Sigmoid colon (tissue), 7 donors: ENCODE measurements at regions of chr1 and their contacts with region 1.

Region 1: DNA sequence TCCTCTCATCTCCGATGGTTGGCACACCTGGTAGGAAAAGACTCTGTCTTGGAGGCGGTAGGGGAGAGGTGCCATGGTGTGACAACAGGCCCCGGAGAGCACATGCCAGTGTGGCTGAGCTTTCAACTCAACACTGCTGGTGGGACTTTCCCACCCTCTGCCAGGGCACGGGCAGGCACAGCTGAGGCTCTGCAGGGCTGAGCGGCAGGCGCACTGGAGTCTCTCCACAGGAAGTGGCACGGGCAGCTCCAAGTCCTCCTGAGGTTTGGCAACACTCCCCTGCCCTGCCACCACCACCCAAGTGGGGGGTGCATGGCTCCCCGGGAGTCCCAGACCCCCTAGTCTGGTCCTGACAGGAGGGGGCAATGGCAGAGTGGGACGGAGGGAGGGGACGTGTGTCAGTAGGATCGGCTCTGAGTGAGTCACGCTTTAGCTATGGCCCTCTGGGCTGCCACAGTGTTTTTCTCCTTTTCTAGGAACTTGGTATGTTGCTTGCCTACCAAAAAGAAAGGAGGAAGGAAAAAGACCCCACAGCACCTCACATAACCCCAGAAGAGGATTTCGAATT is 27.3 kb upstream of the EVA1B start:
- DNase-seq: peak; percentile 77
- H3K4me3 ChIP-seq: no peak overlapping the region
- H3K27ac ChIP-seq: peak overlapping the region; percentile 77 to 88 (median 81)
- H3K4me1 ChIP-seq: peaks cover 0 to 47% (median 39%) of the 10 kb centered on the region in 4 donors
- H3K27me3 ChIP-seq: no peaks in the 10 kb centered on the region
- CTCF ChIP-seq: no peak
- EP300 ChIP-seq: no peak
- POLR2A ChIP-seq: no peak

Region 2: DNA sequence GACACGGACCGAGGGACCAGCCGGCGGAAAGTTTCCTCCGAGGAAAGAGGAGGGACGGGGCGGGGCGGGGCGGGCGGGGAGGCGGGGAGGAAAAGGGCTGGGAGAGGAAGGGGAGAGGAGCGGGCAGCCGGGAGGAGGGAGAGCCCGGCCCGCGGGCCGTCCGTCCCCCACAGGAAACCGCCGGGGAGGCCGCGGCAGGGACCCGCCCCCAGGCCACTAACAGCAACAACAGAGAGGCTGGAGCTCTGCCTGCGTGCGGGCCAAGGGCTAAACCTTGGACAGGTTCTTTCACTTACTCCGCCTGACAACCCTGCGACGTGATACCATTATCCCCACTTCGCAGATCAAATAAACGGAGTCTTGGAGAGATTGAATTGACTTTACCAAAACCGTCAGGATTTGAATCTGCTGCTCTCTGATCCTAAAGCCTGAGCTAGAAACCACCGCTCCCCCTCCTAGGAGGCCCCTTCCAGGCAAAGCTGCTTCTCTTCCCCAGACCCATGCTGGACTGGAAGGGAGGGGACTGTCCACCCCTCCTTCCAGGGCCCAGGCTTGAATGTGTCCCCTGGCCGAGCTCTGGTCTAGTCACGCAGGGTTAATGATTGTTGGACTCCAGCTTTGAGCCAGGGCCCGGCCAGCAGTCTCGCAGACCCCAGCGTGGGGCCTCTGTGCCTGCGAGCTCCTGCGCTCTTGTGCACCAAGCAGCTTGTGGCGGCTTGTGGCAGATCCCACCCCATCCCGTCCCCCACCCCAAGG is 27.0 kb before region 1 on chr1 and contains the start of gene EVA1B:
- intact Hi-C with region 1: loop called (anchors 1 kb)
- DNase-seq: peak; percentile 94
- H3K4me3 ChIP-seq: peak within 1 kb of the TSS; percentile 53 to 85 (median 62)
- H3K27ac ChIP-seq: peak within 1 kb of the TSS; percentile 82 to 89 (median 84)
- H3K4me1 ChIP-seq: peaks cover 0 to 39% (median 33%) of the 10 kb centered on the region in 4 donors
- H3K27me3 ChIP-seq: no peaks in the 10 kb centered on the region
- CTCF ChIP-seq: no peak
- EP300 ChIP-seq: no peak
- POLR2A ChIP-seq: no peak
- total RNA-seq, gene EVA1B: 46.7 to 102 (median 71.0) TPM